ENCODE measurements at regions of chr10 and their contacts with region 1.

Region 1: DNA sequence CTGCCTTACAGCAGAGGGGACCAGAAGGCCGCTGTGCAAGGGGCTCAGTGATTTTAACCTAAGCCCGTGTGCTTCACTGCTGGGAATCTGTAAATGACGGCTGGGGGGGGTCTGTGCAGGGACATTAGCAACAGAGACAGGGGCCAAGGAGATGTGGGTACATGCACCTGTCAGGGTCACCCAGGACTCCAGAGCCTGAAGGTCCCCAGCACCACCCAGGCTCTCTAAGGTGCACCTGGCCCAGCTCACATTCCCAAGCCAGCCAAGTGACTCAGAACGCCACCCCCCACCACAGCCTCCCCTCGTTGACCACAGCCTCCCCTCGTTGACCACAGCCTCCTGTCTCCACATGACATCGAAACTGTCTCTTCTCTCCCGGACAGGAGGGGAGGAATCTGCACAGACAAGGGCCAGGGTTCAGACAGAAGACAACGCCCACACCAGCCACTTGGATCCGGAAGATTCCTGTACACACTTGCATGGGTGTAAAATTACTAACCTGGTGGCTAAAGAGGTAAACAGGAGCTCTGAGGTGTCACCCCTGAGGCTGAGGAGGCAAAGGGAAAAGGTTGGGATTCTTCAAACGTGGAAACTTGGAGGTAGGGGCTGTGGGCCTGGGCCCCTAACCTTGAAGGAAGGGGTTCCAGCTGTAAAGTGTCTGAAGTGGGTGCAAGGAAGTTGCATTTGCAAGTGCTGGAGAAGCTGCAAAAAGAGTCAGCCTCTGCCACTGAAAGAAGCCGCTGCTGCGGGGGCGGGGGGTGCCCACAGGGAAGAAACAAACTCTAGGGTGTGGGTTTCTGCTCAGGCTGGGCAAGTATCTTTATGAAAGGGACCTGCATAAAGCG is 27.0 kb downstream of the CALML3 start:
- H3K4me3 Mint-ChIP-seq: peak overlapping the region; percentile 33
- H3K27ac Mint-ChIP-seq: peak overlapping the region; percentile 41
- H3K4me1 Mint-ChIP-seq: peaks cover 51% of the 10 kb centered on the region
- H3K27me3 Mint-ChIP-seq: peaks cover 4% of the 10 kb centered on the region

Region 2: GRCh38 chr10:5490753-5491464 is 60.8 kb before region 1 on chr10:
- intact Hi-C with region 1: no loop called
- H3K4me3 Mint-ChIP-seq: no peak overlapping the region
- H3K27ac Mint-ChIP-seq: no peak overlapping the region
- H3K4me1 Mint-ChIP-seq: peaks cover 10% of the 10 kb centered on the region
- H3K27me3 Mint-ChIP-seq: peaks cover 10% of the 10 kb centered on the region

Region 3: DNA sequence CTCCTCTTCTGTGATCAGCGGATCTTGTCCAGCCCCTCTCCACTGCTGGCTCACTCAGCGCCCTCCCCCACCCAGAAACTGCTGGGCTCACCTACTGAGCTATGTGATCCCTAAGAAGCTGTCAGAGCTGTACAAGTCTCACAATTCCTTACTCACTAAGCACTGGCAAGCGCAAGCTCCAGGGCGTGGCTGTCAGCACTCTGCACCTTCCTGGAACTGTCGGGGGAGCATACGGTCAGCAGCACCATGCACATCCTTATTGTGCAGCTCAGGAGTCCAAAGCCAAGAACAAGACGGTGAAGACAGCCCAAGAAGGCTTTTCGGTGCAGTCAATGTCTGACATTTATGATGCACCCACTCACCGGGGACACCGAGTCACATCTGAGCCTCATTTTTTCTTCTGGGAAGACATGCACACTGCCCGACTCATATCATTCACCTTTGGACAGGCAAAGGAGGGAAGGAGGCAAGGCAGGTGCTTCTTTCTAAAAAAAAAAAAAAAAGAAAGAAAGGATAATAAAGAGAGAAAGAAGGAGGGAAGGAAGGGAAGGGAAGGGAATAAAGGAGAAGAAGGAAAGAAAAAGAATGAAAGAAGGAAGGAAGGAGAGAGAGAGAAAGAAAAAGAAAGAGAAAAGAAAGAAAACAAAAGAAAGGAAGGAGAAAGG is 58.3 kb after region 1 on chr10:
- intact Hi-C with region 1: loop called (anchors 10 kb)
- H3K4me3 Mint-ChIP-seq: no peak overlapping the region
- H3K27ac Mint-ChIP-seq: no peak overlapping the region
- H3K4me1 Mint-ChIP-seq: peaks cover 32% of the 10 kb centered on the region
- H3K27me3 Mint-ChIP-seq: peaks cover 19% of the 10 kb centered on the region

Region 4: GRCh38 chr10:5812283-5813031 is 260.7 kb after region 1 on chr10:
- intact Hi-C with region 1: no loop called
- H3K4me3 Mint-ChIP-seq: peak overlapping the region; percentile 99
- H3K27ac Mint-ChIP-seq: peak overlapping the region; percentile 98
- H3K4me1 Mint-ChIP-seq: peaks cover 69% of the 10 kb centered on the region
- H3K27me3 Mint-ChIP-seq: no peaks in the 10 kb centered on the region

Measured in dendritic cell treated with granulocyte-macrophage colony-stimulating factor and Interleukin-4, amounts not matched to agents 40 ng/mL and 50 ng/mL, for 4 days (primary cell).